ENCODE measurements at regions of chr15 and their contacts with region 1.

Region 1: DNA sequence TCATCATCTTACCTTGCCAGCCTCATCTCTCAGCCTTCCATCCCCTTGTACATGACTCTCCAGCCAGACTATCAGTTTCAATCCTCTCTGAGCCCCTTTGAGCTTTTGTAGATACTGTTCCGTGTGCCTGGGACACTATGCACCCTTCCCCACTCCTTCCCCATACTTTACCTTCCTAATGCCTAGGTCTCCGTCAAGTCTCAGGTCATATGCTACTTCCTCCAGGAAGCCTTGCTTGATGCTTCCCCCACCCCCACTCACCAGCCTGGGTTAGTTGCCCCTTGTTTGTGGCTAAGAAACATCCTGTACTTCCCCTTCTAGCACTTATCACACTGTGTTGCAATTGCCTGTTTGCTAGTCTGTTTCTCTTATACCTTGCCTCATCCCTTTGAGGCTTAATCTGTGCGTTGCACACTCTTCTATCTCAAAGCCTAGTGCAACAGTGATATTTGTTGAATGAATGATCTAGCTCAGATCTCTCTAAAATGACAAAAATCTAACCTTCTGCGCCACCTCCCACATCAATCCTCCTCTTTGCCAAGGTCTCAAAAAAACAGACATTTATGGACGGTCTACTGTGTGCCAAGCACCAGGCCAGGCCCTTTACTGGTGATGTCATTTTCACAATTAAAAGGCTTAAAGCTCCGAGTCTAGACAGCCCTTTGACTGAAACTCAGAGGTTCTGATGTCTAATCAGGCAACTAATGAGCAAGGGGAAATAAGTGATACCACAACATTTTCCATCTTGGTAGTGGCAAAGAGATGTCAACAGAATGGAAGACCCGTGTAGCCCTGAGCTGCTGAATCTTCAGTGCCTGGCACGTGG is 6.5 kb upstream of the USP3 start:
- DNase-seq: peak; percentile 77
- H3K4me3 Mint-ChIP-seq: no peak overlapping the region
- H3K27ac Mint-ChIP-seq: no peak overlapping the region
- H3K4me1 Mint-ChIP-seq: peaks cover 80% of the 10 kb centered on the region
- H3K27me3 Mint-ChIP-seq: no peaks in the 10 kb centered on the region

Region 2: DNA sequence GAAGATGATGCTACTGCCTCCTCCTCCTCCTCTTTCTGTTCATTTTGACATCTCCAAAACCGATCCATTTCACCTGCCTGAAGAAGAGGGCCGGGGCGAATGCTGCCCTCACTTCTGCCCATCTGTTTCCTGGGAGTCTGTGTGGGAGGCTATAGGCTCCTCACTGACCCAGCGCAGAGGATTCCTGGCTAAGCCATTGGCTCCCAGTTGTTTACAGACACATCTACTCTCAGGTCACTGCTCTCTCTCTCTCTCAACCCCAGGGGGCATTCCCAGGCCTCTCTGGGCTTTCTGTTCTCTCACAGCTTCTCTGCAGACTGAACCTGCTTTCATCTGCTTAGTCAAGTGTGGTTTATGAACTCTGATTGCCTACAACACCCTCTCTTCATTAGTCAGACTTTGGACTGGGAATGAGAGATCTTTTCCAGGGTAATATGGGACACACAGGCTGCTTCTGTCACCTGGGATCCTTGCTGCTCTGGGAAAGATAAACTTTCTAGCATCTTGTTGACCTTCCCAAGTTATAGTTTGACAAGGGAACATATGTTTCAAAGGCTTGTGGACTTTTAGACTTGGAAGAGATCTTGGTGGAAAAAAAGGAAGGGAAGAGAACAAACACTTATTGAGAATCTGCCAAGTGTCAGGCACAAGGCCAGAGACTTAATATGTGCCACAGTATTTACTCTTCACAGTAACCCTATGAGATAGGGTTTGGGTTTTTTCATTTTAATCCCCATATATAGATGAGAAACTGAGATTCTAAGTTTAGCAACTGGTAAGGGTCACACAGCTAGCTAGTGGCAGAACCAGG is 23.7 kb before region 1 on chr15:
- CTCF ChIA-PET with region 1: interaction called, 4 read pairs
- POLR2A ChIA-PET with region 1: no interaction called
- intact Hi-C with region 1: loop called (anchors 1 kb)
- DNase-seq: peak; percentile 84
- H3K4me3 Mint-ChIP-seq: peak overlapping the region; percentile 43
- H3K27ac Mint-ChIP-seq: peak overlapping the region; percentile 72
- H3K4me1 Mint-ChIP-seq: peaks cover 55% of the 10 kb centered on the region
- H3K27me3 Mint-ChIP-seq: no peaks in the 10 kb centered on the region

Region 3: DNA sequence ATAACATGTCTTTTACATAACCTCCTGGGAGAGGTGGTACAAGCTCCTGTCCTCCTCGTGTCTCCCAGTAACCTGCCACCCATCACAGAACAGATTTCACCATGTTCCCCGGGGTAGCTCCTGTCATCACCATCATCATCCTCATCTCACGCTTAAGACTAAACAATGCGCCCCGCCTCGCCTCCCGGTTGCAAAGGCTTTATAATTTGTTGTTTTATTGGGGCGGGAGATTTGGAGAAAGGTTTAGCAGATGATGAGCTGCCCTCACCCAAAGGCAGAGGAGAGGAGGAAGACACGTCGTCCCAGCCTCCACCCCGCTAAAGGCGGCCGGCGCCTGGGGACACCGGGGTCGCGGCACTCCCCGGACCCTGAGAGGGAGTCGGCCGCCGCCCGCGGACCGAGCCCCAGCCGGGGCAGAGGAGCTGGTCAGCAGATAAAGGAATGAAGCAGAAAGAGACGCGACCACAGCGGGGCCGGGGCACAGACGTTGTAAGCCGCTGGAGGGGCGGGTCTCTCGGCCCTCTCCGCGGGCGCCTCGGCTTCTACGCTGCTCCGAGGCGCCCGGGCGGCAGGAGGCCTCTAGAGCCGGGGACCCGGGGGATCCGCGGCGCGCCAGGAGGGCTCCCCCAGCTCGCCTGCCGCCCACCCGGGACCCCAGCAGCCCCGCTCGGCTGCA is 335.3 kb after region 1 on chr15:
- CTCF ChIA-PET with region 1: no interaction called
- POLR2A ChIA-PET with region 1: no interaction called
- intact Hi-C with region 1: no loop called
- DNase-seq: peak; percentile 46
- H3K4me3 Mint-ChIP-seq: peak overlapping the region; percentile 96
- H3K27ac Mint-ChIP-seq: peak overlapping the region; percentile 66
- H3K4me1 Mint-ChIP-seq: peaks cover 44% of the 10 kb centered on the region
- H3K27me3 Mint-ChIP-seq: no peaks in the 10 kb centered on the region